Stomach (tissue), 19 donors: ENCODE measurements at regions of chr9 and their contacts with region 1.

Region 1: DNA sequence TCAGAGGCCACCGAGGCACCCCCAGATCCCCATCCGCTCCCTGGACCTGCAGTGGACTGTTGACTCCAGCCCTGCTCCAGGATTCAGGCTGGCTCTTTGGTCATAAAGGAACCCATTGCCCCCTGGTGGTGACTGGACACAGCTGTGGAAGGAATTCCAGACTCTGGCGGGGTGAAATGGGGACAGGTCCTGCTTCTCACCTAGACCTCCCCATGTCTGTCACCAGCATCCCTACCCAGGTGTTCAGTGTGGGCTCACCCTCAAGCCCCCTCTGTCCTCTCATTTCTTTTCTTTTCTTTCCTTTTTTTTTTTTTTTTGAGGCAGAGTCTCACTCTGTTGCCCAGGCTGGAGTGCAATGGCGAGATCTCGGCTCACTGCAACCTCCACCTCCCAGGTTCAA is 25.5 kb upstream of the STXBP1 start:
- DNase-seq: peak; percentile 87 to 93
- H3K4me3 ChIP-seq: no peak overlapping the region
- H3K27ac ChIP-seq: no peak overlapping the region
- H3K4me1 ChIP-seq: peaks cover 0 to 50% (median 24%) of the 10 kb centered on the region in 4 donors
- H3K27me3 ChIP-seq: no peaks in the 10 kb centered on the region
- CTCF ChIP-seq: peak in 6 of 7 experiments; percentile 70 to 98 (median 84)
- EP300 ChIP-seq: no peak
- POLR2A ChIP-seq: no peak

Region 2: GRCh38 chr9:127503947-127504782 is 82.4 kb before region 1 on chr9:
- intact Hi-C with region 1: loop called (anchors 2 kb)
- DNase-seq: peak; percentile 90 to 94
- H3K4me3 ChIP-seq: no peak overlapping the region
- H3K27ac ChIP-seq: peak overlapping the region in 4 of 5 donors; percentile 26 to 69 (median 46)
- H3K4me1 ChIP-seq: peaks cover under 1 to 40% (median 23%) of the 10 kb centered on the region in 4 donors
- H3K27me3 ChIP-seq: no peaks in the 10 kb centered on the region
- CTCF ChIP-seq: peak in 5 of 7 experiments; percentile 80 to 94 (median 86)
- EP300 ChIP-seq: no peak
- POLR2A ChIP-seq: no peak

Region 3: DNA sequence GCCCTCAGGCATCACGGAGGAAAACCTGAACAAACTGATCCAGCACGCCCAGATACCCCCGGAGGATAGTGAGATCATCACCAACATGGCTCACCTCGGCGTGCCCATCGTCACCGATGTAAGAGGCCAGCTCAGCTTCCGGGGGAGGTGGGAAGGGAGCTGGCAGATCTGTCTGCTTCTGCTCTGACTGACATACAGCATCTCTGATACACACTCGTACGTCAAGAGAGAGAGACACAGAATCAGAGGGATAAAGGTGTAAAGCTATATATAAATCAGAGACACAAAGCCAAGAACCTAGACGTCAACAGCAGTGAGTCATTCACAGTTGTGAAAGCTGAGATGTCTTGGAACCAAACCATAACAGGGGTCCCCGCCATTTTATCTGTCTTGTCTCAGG is 90.1 kb after region 1 on chr9:
- intact Hi-C with region 1: no loop called
- DNase-seq: no peak
- H3K4me3 ChIP-seq: no peak overlapping the region
- H3K27ac ChIP-seq: no peak overlapping the region
- H3K4me1 ChIP-seq: no peaks in the 10 kb centered on the region
- H3K27me3 ChIP-seq: no peaks in the 10 kb centered on the region
- CTCF ChIP-seq: no peak
- EP300 ChIP-seq: no peak
- POLR2A ChIP-seq: no peak

Region 4: DNA sequence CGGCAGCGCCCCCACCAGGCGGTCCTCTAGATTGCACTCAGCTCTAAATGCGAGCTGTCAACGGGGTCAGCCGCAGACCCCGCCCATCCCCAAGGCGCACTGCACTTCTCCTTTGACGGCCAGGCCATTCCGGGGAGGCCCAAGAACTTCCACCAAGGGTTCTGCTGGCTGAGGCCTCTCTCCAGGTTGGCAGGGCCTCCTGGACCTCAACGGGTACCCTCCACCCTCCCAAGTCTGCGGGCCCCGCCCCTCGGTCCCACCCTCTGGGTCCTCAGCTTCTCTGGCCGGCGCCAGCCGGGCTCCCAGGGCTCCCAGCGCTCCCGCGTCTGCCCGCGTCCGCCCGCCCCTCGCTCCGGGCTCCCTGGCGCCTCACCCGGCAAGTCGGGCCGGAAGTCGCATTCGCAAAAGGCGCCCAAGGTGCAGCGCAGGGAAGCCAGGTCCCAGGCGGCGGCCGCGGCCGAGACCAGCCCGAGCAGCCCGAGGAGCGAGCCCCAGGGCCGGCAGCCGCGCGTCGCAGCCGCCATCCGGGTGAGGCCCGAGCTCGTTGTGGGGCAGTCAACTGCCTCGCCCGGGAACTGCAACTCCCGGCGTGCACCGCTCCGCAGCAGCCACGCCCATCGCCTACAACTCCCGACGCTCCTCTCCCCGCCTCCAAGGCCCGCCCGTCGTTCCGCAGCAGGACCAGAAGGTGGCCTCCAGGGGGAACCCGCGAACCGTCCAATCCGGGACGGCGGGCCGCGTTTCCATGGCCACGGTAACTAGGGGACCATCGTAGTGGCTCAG is 148.4 kb after region 1 on chr9 and contains the start of gene TOR2A:
- intact Hi-C with region 1: loop called (anchors 5 kb)
- DNase-seq: peak; percentile 97 to 100
- H3K4me3 ChIP-seq: peak within 1 kb of the TSS; percentile 70 to 78 (median 76)
- H3K27ac ChIP-seq: peak within 1 kb of the TSS; percentile 96 to 99 (median 97)
- H3K4me1 ChIP-seq: peaks cover 7 to 23% (median 20%) of the 10 kb centered on the region in 4 donors
- H3K27me3 ChIP-seq: no peaks in the 10 kb centered on the region
- CTCF ChIP-seq: peak in 6 of 7 experiments; percentile 69 to 99 (median 90)
- EP300 ChIP-seq: no peak
- POLR2A ChIP-seq: peak in 1 of 4 donors; percentile 45
- total RNA-seq, gene TOR2A: 5.0 to 87.8 (median 14.6) TPM

Region 5: GRCh38 chr9:127921557-127922120 is 335.1 kb after region 1 on chr9:
- intact Hi-C with region 1: loop called (anchors 5 kb)
- DNase-seq: peak; percentile 81 to 85
- H3K4me3 ChIP-seq: peak overlapping the region in 3 of 4 donors; percentile 7 to 31 (median 13)
- H3K27ac ChIP-seq: no peak overlapping the region
- H3K4me1 ChIP-seq: peaks cover 33 to 51% (median 40%) of the 10 kb centered on the region in 4 donors
- H3K27me3 ChIP-seq: peaks cover 0 to 29% (median 5%) of the 10 kb centered on the region in 3 donors
- CTCF ChIP-seq: peak in 5 of 7 experiments; percentile 93 to 99 (median 96)
- EP300 ChIP-seq: no peak
- POLR2A ChIP-seq: no peak